Cardiac septum (tissue), 1 donor: ENCODE measurements at regions of chr12 and their contacts with region 1.

Region 1: DNA sequence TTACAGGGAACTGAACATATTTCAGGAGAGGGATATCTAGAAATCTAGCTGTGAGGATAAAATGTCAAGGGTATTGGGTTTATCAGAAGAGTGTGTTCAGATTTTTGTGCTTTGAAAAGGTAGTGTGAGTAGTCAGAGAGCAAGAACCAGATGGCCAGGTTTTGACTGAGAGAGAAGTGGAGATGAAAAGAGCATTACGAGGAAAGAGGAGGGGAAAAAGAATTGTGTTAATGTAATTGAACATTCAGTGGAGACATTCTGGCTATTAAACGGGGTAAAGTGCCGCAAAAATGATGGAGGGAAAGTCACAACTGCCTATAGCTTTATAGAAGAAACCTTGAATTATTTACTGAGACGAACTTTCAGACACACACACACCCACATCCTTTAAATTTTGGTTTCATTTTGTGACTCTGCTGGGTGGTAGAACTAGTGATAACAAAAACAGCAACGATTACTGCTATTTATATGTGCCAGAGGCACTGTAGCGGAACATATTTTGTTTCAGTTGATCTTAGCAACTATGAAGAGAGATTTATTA is 213.6 kb downstream of the ERC1 start:
- DNase-seq: no peak

Region 2: DNA sequence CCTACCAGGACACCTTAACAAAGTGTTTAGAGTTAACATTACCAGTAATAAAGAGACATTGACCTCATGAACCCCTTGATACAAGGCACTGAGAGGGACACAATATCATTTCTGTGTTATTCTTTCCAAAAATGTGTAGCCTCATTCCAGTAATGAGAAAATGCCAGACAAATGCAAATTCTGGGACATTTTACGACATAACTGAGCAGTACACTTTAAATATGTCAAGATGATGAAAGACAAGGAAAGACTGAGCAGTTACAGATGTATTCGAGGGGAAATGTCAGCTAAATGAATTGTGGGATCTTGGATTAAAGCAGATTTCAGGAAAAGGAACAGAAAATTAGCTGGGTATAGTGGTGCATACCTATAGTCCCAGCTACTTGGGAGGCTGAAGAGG is 42.0 kb after region 1 on chr12:
- intact Hi-C with region 1: no loop called
- DNase-seq: no peak

Region 3: GRCh38 chr12:1594261-1595025 is 389.8 kb after region 1 on chr12 and contains the start of gene FBXL14:
- intact Hi-C with region 1: loop called (anchors 10 kb)
- DNase-seq: peak; percentile 93
- total RNA-seq, gene FBXL14: 6.9 TPM